Right ventricle myocardium inferior (tissue), 1 donor: ENCODE measurements at regions of chr21 and their contacts with region 1.

Region 1: DNA sequence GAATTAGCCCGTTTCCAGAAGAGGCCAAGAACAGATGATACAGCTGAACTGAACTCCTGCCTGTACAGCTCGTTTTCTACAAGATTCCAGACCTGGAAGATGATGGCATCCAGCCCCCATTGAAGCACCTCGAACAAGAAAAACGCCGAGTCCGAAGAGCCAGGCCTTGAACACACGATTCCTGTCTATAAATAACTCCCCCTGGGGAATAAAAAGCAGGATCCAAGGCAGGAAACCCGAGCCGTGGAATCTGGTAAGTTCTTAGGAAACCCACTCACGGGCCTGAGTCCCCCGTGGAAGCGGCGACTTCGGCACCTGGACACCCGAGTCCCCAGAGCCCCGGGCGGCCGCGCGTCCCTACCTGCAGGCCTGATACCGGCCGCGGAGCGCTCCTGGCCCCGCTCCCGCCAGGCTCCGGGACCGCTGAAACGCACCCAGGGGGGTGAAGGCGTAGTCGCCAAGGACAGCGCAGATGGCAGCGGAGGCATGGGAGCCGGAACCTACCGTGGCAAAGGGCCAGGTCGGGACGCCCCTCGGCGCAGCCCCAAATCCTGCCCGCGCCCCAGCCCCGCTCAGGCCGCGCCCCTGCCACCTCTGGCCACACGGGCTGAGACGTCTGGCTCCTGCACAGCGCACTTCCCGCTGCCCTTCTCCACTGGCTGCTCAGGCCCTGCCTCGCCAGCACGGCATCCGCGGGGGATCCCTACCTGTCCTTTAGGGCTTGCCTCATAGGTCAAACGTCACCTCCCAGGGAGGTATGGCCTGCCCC is 14.0 kb upstream of the HLCS start:
- DNase-seq: peak; percentile 76
- ATAC-seq: peak; percentile 77

Region 2: GRCh38 chr21:36966066-36966820 is 14.2 kb before region 1 on chr21 and contains the start of gene HLCS:
- intact Hi-C with region 1: loop called (anchors 2 kb)
- DNase-seq: peak; percentile 76
- ATAC-seq: peak; percentile 91
- total RNA-seq, gene HLCS: 6.8 TPM